PC-9 (cell line): ENCODE measurements at regions of chr3 and their contacts with region 1.

Region 1: GRCh38 chr3:155495387-155495786 is 201.9 kb upstream of the STRIT1 start:
- DNase-seq: no peak
- H3K4me3 ChIP-seq: no peak overlapping the region
- H3K27ac ChIP-seq: no peak overlapping the region
- H3K4me1 ChIP-seq: peaks cover 8% of the 10 kb centered on the region; the same call in 1 of the 2 replicates
- H3K27me3 ChIP-seq: no peaks in the 10 kb centered on the region
- CTCF ChIP-seq: no peak

Region 2: GRCh38 chr3:155362808-155363689 is 132.3 kb before region 1 on chr3:
- CTCF ChIA-PET with region 1: no interaction called
- POLR2A ChIA-PET with region 1: no interaction called
- intact Hi-C with region 1: no loop called
- DNase-seq: no peak
- H3K4me3 ChIP-seq: no peak overlapping the region
- H3K27ac ChIP-seq: no peak overlapping the region
- H3K4me1 ChIP-seq: no peaks in the 10 kb centered on the region
- H3K27me3 ChIP-seq: no peaks in the 10 kb centered on the region
- CTCF ChIP-seq: no peak

Region 3: DNA sequence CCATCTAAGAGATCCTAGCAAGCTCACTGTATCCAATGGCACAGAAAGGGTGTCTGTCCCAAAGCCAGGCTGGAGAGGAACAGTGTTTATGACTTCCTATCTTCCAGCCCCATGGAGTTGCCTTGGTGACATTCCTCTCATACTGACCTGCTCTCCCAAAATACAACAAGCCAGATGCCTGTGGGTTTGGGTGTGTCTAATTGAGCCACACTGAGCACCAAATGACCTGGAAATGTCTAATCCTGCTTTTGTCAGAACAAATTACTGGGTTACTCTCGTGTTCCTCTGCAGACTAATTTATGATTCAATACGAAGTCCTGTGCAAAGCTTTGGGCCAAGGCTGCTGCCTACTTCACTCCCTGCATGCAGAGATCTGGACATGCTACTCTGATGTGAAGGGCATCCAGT is 103.8 kb before region 1 on chr3:
- CTCF ChIA-PET with region 1: no interaction called
- POLR2A ChIA-PET with region 1: no interaction called
- intact Hi-C with region 1: loop called (anchors 5 kb)
- DNase-seq: peak; percentile 75 to 94
- H3K4me3 ChIP-seq: no peak overlapping the region
- H3K27ac ChIP-seq: 0 out of 2 replicates have a peak overlapping the region, but pooled peaks have one; percentile 3
- H3K4me1 ChIP-seq: peaks cover 25% of the 10 kb centered on the region
- H3K27me3 ChIP-seq: no peaks in the 10 kb centered on the region
- CTCF ChIP-seq: no peak

Region 4: DNA sequence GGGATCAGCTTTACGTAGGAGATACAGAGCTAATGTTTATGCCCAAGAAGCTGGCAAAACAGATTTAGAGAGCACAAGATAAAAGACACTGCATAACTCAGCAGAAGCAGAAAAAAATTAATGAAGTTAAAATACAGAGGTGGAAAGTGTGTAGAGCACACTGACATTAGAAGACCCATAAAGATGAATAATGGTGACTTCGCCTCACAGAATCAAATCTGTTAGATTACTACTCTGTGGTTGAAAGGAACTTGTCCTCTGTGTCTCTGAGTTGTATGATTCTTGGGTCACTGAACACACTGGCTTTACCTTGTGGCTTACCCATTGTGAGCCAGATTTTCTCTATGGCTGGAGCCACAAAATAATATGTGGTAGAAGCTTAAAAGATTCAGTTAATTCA is 25.1 kb after region 1 on chr3:
- CTCF ChIA-PET with region 1: no interaction called
- POLR2A ChIA-PET with region 1: no interaction called
- intact Hi-C with region 1: loop called (anchors 2 kb)
- DNase-seq: no peak
- H3K4me3 ChIP-seq: no peak overlapping the region
- H3K27ac ChIP-seq: no peak overlapping the region
- H3K4me1 ChIP-seq: no peaks in the 10 kb centered on the region
- H3K27me3 ChIP-seq: no peaks in the 10 kb centered on the region
- CTCF ChIP-seq: no peak

Region 5: GRCh38 chr3:156633335-156633734 is 1137.9 kb after region 1 on chr3:
- CTCF ChIA-PET with region 1: no interaction called
- POLR2A ChIA-PET with region 1: no interaction called
- intact Hi-C with region 1: no loop called
- DNase-seq: no peak
- H3K4me3 ChIP-seq: no peak overlapping the region
- H3K27ac ChIP-seq: no peak overlapping the region
- H3K4me1 ChIP-seq: peaks cover 36% of the 10 kb centered on the region
- H3K27me3 ChIP-seq: no peaks in the 10 kb centered on the region
- CTCF ChIP-seq: no peak